ENCODE measurements at regions of chr1 and their contacts with region 1.

Region 1: DNA sequence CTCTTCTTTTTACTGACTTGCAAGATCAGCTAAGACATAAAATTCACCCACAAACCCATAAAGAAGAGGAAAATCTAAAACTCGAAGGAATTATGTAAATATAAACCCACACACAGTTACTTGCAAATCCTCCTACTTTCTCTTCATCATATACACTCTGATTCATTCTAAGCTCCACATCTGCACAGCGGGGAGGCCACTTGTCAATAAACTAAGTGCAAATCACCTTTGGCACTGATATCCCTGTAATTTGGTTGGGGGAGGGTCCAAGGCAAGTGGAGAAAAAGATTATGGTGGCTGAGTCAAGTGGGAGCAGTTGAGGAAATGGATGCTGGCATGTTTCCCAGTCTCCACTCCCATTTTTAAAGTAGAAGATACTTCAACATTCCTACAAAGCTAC is 596.5 kb downstream of the MATN1 start:
- DNase-seq: no peak
- ATAC-seq: no peak
- H3K4me3 ChIP-seq: no peak overlapping the region
- H3K27ac ChIP-seq: no peak overlapping the region
- H3K4me1 ChIP-seq: peaks cover 25 to 36% of the 10 kb centered on the region in 2 experiments; a peak in 4 of 5 replicates
- H3K27me3 ChIP-seq: peaks cover 0 to 14% of the 10 kb centered on the region in 2 experiments; a peak in 2 of 5 replicates
- CTCF ChIP-seq: no peak
- EP300 ChIP-seq: no peak
- POLR2A ChIP-seq: no peak
- RAD21 ChIP-seq: no peak

Region 2: GRCh38 chr1:29924017-29924431 is 202.8 kb before region 1 on chr1:
- CTCF ChIA-PET with region 1: no interaction called
- POLR2A ChIA-PET with region 1: no interaction called
- in situ Hi-C with region 1: no loop called
- intact Hi-C with region 1: no loop called
- DNase-seq: no peak
- ATAC-seq: no peak
- H3K4me3 ChIP-seq: no peak overlapping the region
- H3K27ac ChIP-seq: no peak overlapping the region
- H3K4me1 ChIP-seq: no peaks in the 10 kb centered on the region
- H3K27me3 ChIP-seq: no peaks in the 10 kb centered on the region; a peak in 1 of 5 replicates
- CTCF ChIP-seq: no peak
- EP300 ChIP-seq: no peak
- POLR2A ChIP-seq: no peak
- RAD21 ChIP-seq: no peak

Region 3: DNA sequence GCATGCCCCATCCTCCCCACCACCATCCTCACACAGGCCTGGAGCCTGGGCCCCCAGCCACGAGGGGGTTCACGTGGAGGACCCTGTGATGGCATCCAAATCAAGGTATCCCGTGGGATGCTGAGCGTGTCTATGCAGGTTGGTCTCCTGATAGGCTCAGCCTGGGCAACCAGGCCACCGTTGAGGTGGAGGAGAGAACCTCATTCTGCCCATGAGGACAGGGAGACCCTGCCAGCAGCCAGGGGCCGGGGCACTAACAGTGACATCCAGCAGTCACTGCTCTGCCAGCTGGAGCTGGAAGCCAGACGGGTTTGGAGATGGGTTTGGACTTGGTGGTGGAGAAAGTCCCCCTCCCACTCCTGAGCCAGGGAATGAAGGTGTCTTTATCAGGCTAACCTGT is 13.7 kb after region 1 on chr1:
- CTCF ChIA-PET with region 1: no interaction called
- POLR2A ChIA-PET with region 1: interaction called, 23 read pairs
- in situ Hi-C with region 1: no loop called
- intact Hi-C with region 1: no loop called
- DNase-seq: no peak
- ATAC-seq: no peak
- H3K4me3 ChIP-seq: no peak overlapping the region
- H3K27ac ChIP-seq: no peak overlapping the region
- H3K4me1 ChIP-seq: no peaks in the 10 kb centered on the region
- H3K27me3 ChIP-seq: peaks cover 4 to 18% of the 10 kb centered on the region in 2 experiments; a peak in 4 of 5 replicates
- CTCF ChIP-seq: no peak
- EP300 ChIP-seq: no peak
- POLR2A ChIP-seq: no peak
- RAD21 ChIP-seq: no peak

Region 4: GRCh38 chr1:30572192-30572591 is 445.3 kb after region 1 on chr1:
- CTCF ChIA-PET with region 1: no interaction called
- POLR2A ChIA-PET with region 1: no interaction called
- in situ Hi-C with region 1: no loop called
- intact Hi-C with region 1: no loop called
- DNase-seq: no peak
- ATAC-seq: no peak
- H3K4me3 ChIP-seq: no peak overlapping the region
- H3K27ac ChIP-seq: no peak overlapping the region
- H3K4me1 ChIP-seq: no peaks in the 10 kb centered on the region
- H3K27me3 ChIP-seq: peaks cover 0 to 3% of the 10 kb centered on the region in 2 experiments; a peak in 1 of 5 replicates
- CTCF ChIP-seq: no peak
- EP300 ChIP-seq: no peak
- POLR2A ChIP-seq: no peak
- RAD21 ChIP-seq: no peak